Activated CD4-positive, alpha-beta T cell treated with anti-CD3 and anti-CD28 coated beads for 36 hours (primary cell): ENCODE measurements at regions of chr5 and their contacts with region 1.

Region 1: DNA sequence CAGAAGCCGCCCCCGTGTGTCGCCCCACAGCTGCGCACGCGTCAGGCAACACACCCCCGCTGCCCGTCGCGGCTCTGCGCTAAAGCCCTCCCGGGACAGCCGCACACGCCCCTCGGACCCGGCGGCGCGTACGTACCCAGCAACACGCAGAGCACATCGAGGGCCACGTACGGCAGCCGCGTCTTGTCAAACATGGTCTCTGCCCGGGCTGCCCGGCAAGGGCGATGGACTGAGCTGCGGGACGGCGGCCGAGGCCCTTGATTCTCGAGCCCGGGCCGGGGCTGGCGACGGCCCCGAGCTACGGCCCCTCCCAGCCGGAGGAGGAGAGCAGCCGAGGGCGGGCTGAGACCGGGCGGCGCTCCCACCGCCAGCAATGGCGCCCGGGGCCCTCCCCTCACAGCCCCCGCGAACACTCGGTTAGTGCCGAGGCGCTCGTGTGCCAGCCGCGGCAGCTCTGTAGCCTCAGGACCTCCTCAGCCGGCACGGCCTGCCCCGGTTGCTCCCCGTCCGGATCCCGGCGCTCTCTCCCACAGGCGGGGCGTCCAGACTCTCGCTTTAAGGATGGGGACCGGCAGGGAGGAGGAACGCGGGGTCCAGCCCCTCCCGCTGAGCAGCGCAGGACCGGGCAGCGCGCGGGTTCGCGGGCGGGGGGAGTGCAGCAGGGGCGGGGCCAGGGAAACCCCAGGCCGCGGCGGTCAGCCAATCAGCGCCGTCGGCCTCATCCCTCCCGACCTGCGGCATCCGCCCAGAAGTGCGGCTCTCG is at the start of gene PLPP1:
- DNase-seq: peak; percentile 91
- ATAC-seq: peak; percentile 89
- H3K4me3 Mint-ChIP-seq: peak within 1 kb of the TSS; percentile 79
- H3K27ac Mint-ChIP-seq: peak within 1 kb of the TSS; percentile 88
- H3K4me1 Mint-ChIP-seq: peaks cover 27% of the 10 kb centered on the region
- H3K27me3 Mint-ChIP-seq: no peaks in the 10 kb centered on the region
- total RNA-seq, gene PLPP1: 7.9 to 8.2 TPM

Region 2: GRCh38 chr5:55226027-55226933 is 308.3 kb before region 1 on chr5:
- CTCF ChIA-PET with region 1: no interaction called
- POLR2A ChIA-PET with region 1: no interaction called
- intact Hi-C with region 1: loop called in 1 of 2 experiments (anchors 5 kb)
- DNase-seq: peak; percentile 88
- ATAC-seq: peak; percentile 70
- H3K4me3 Mint-ChIP-seq: peak overlapping the region; percentile 61
- H3K27ac Mint-ChIP-seq: no peak overlapping the region
- H3K4me1 Mint-ChIP-seq: peaks cover 37% of the 10 kb centered on the region
- H3K27me3 Mint-ChIP-seq: peaks cover 78% of the 10 kb centered on the region